CD14-positive monocyte (primary cell): ENCODE measurements at regions of chr10 and their contacts with region 1.

Region 1: GRCh38 chr10:17001961-17002749 is 127.5 kb downstream of the CUBN start:
- DNase-seq: peak; percentile 46 to 87 (median 71)
- H3K4me3 ChIP-seq: no peak overlapping the region
- H3K4me3 Mint-ChIP-seq: no peak overlapping the region
- H3K27ac ChIP-seq: no peak overlapping the region
- H3K27ac Mint-ChIP-seq: peak overlapping the region in 5 of 7 donors; percentile 20 to 89 (median 85)
- H3K4me1 ChIP-seq: peaks cover 10 to 12% of the 10 kb centered on the region in 2 donors
- H3K4me1 Mint-ChIP-seq: peaks cover 18% of the 10 kb centered on the region
- H3K27me3 ChIP-seq: peaks cover 0 to 4% of the 10 kb centered on the region in 2 donors
- H3K27me3 Mint-ChIP-seq: peaks cover 0 to 12% (median 3%) of the 10 kb centered on the region in 3 donors
- CTCF ChIP-seq: no peak

Region 2: GRCh38 chr10:16965740-16966447 is 36.3 kb before region 1 on chr10:
- intact Hi-C with region 1: loop called in 1 of 2 experiments (anchors 5 kb)
- DNase-seq: no peak
- H3K4me3 ChIP-seq: no peak overlapping the region
- H3K4me3 Mint-ChIP-seq: peak overlapping the region in 1 of 2 donors; percentile 59
- H3K27ac ChIP-seq: no peak overlapping the region
- H3K27ac Mint-ChIP-seq: peak overlapping the region in 4 of 7 donors; percentile 69 to 85 (median 78)
- H3K4me1 ChIP-seq: peaks cover 29% of the 10 kb centered on the region in 2 donors
- H3K4me1 Mint-ChIP-seq: peaks cover 28% of the 10 kb centered on the region
- H3K27me3 ChIP-seq: peaks cover 22 to 29% of the 10 kb centered on the region in 2 donors
- H3K27me3 Mint-ChIP-seq: peaks cover 18 to 37% (median 33%) of the 10 kb centered on the region in 3 donors
- CTCF ChIP-seq: no peak